ENCODE measurements at regions of chr1 and their contacts with region 1.

Region 1: GRCh38 chr1:189627427-189627826 is 850.2 kb downstream of the BRINP3 start:
- DNase-seq: no peak
- ATAC-seq: no peak
- H3K4me3 ChIP-seq: no peak overlapping the region
- H3K27ac ChIP-seq: no peak overlapping the region
- H3K4me1 ChIP-seq: no peaks in the 10 kb centered on the region
- H3K27me3 ChIP-seq: no peaks in the 10 kb centered on the region
- CTCF ChIP-seq: no peak
- POLR2A ChIP-seq: no peak
- RAD21 ChIP-seq: no peak

Region 2: GRCh38 chr1:189574419-189574818 is 53.0 kb before region 1 on chr1:
- CTCF ChIA-PET with region 1: no interaction called
- POLR2A ChIA-PET with region 1: no interaction called
- dilution Hi-C with region 1: no loop called
- in situ Hi-C with region 1: no loop called
- intact Hi-C with region 1: no loop called
- DNase-seq: no peak
- ATAC-seq: no peak
- H3K4me3 ChIP-seq: no peak overlapping the region
- H3K27ac ChIP-seq: no peak overlapping the region
- H3K4me1 ChIP-seq: no peaks in the 10 kb centered on the region
- H3K27me3 ChIP-seq: no peaks in the 10 kb centered on the region
- CTCF ChIP-seq: no peak
- POLR2A ChIP-seq: no peak
- RAD21 ChIP-seq: no peak

Region 3: DNA sequence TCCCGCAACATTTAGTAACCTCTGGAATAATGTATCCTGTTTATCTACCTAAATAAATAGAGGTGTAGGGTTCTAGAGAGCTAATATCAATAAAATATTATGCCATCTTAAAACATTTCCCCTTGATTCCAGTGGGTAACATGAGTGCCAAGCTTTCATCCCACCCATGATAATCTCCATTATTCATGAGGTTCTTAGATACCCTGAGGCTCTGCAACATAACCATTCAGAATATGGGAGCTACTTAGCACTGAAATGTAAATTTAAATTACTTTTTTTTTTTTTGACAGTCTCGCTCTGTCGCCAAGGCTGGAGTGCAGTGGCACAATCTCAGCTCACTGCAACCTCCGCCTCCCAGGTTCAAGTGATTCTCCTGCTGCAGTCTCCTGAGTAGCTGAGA is 17.5 kb after region 1 on chr1:
- CTCF ChIA-PET with region 1: no interaction called
- POLR2A ChIA-PET with region 1: no interaction called
- dilution Hi-C with region 1: no loop called
- in situ Hi-C with region 1: no loop called
- intact Hi-C with region 1: loop called (anchors 1 kb)
- DNase-seq: no peak
- ATAC-seq: no peak
- H3K4me3 ChIP-seq: no peak overlapping the region
- H3K27ac ChIP-seq: no peak overlapping the region
- H3K4me1 ChIP-seq: no peaks in the 10 kb centered on the region
- H3K27me3 ChIP-seq: no peaks in the 10 kb centered on the region
- CTCF ChIP-seq: no peak
- POLR2A ChIP-seq: no peak
- RAD21 ChIP-seq: no peak

Region 4: DNA sequence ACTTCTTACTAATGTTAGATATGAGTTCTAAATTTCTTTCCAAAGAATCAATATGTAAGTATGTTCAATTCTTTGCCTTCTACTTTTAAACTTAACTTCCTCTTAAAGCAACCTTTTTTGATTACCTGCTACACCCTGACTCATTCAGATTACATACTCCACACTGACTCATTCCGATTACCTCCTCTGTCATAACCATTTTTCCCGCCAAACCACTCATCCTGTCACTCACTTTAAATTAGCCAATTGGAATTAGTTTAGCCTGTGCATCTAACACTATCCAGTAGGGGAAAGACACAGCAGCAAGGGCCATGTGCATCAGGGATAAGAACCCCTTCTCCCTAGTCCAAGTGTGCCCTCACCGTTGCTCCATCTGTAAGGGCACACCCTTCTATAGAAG is 34.8 kb after region 1 on chr1:
- CTCF ChIA-PET with region 1: no interaction called
- POLR2A ChIA-PET with region 1: no interaction called
- dilution Hi-C with region 1: no loop called
- in situ Hi-C with region 1: no loop called
- intact Hi-C with region 1: no loop called
- DNase-seq: peak; percentile 10
- ATAC-seq: no peak
- H3K4me3 ChIP-seq: no peak overlapping the region
- H3K27ac ChIP-seq: no peak overlapping the region
- H3K4me1 ChIP-seq: no peaks in the 10 kb centered on the region
- H3K27me3 ChIP-seq: no peaks in the 10 kb centered on the region
- CTCF ChIP-seq: no peak
- POLR2A ChIP-seq: no peak
- RAD21 ChIP-seq: no peak

Measured in IMR-90 (cell line).